ENCODE measurements at regions of chr10 and their contacts with region 1.

Region 1: GRCh38 chr10:14648005-14648765 is 126.5 kb downstream of the FAM107B start:
- DNase-seq: peak; percentile 56
- ATAC-seq: peak; percentile 79
- H3K4me3 Mint-ChIP-seq: peak overlapping the region; percentile 75
- H3K27ac Mint-ChIP-seq: peak overlapping the region; percentile 98
- H3K4me1 Mint-ChIP-seq: peaks cover 80% of the 10 kb centered on the region
- H3K27me3 Mint-ChIP-seq: no peaks in the 10 kb centered on the region
- CTCF ChIP-seq: no peak

Region 2: DNA sequence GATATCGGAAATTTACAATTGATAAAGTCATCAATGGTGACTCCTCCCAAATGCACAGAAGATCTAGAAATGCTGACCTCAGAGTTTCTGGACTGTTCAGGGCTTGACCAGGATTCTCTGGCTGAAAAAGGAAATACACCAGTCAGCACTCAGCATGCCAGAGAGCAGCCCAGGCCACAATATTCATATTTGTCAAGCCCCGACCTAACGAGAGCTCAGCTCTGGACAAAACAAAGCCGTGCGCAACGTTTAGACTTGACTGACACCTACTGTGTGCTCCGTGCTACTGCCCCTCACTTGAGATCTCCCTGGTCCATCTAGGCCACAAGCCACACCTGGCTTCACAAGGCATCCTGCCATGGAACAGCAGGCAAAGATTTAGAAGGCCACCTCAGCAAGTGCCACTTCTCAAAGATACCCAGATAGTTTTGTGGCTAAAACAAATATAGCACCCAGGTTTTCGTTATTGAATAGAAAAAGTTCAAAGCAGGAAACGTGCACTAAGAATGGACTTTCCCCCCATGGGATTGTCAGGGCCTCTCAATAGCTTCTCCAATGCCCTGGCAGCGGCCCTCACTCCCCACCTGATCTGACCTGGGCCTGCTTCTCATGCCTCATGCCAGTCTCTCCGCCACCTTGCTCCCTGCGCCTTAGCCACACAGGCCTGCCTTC is 91.8 kb before region 1 on chr10:
- CTCF ChIA-PET with region 1: interaction called, 3 read pairs
- POLR2A ChIA-PET with region 1: interaction called, 5 read pairs
- intact Hi-C with region 1: loop called (anchors 2 kb)
- DNase-seq: no peak
- ATAC-seq: peak; percentile 49
- H3K4me3 Mint-ChIP-seq: peak overlapping the region; percentile 59
- H3K27ac Mint-ChIP-seq: peak overlapping the region; percentile 91
- H3K4me1 Mint-ChIP-seq: peaks cover 96% of the 10 kb centered on the region
- H3K27me3 Mint-ChIP-seq: no peaks in the 10 kb centered on the region
- CTCF ChIP-seq: no peak

Region 3: DNA sequence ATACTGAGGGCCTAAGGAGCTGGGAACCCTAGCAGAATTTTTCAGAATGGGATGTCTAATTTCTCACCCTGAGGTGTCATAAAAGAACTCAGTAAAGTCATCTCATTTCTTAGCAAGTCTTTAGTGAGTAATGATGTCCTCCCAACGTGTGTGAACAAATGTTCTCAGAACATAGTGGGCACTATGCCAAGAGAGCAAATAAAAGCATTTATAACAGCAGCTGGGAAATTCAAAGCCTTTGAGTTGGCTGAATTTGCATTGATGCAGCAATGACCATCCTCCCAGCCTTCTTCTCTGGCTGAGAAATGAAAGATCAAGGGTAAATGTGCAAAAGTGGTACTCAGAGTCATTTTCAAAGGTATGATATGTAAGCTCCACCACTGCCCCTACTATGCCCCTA is 17.1 kb after region 1 on chr10:
- CTCF ChIA-PET with region 1: no interaction called
- POLR2A ChIA-PET with region 1: interaction called, 12 read pairs
- intact Hi-C with region 1: no loop called
- DNase-seq: no peak
- ATAC-seq: no peak
- H3K4me3 Mint-ChIP-seq: no peak overlapping the region
- H3K27ac Mint-ChIP-seq: no peak overlapping the region
- H3K4me1 Mint-ChIP-seq: peaks cover 29% of the 10 kb centered on the region
- H3K27me3 Mint-ChIP-seq: no peaks in the 10 kb centered on the region
- CTCF ChIP-seq: no peak

Region 4: GRCh38 chr10:14742815-14743214 is 94.6 kb after region 1 on chr10:
- CTCF ChIA-PET with region 1: no interaction called
- POLR2A ChIA-PET with region 1: interaction called, 11 read pairs
- intact Hi-C with region 1: no loop called
- DNase-seq: no peak
- ATAC-seq: peak; percentile 83
- H3K4me3 Mint-ChIP-seq: peak overlapping the region; percentile 64
- H3K27ac Mint-ChIP-seq: peak overlapping the region; percentile 89
- H3K4me1 Mint-ChIP-seq: peaks cover 96% of the 10 kb centered on the region
- H3K27me3 Mint-ChIP-seq: no peaks in the 10 kb centered on the region
- CTCF ChIP-seq: no peak

Region 5: DNA sequence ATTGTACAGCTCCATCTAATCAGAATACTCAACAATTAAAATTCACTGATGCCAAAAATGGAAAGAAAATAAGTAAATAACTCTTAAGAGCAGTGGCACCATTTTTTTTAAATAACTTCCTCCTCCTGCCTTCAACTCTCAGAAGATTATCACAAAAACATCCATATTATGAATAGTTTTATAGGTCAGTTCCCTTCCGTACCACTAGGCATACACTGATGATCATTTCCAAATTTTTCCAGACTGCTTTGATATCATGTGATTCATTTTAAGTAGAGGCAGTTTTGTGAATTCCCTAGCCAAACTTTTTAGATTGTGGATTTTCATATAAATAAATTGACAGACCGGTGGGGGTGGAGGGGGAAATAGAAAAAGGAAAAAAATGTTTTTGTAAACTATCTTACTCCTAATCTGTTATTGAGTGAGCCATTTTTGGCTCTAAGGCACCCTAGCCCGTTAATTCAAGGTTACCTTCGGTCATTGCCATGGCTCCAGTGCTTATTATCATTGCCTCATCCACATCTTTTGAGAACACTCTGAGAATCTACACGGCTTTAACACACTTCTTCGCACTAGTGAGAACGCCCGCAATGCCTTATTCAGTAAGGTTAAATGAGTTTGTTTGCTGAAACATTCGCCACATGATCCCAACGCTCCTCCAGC is 125.5 kb after region 1 on chr10:
- CTCF ChIA-PET with region 1: no interaction called
- POLR2A ChIA-PET with region 1: interaction called, 11 read pairs
- intact Hi-C with region 1: no loop called
- DNase-seq: no peak
- ATAC-seq: no peak
- H3K4me3 Mint-ChIP-seq: no peak overlapping the region
- H3K27ac Mint-ChIP-seq: no peak overlapping the region
- H3K4me1 Mint-ChIP-seq: no peaks in the 10 kb centered on the region
- H3K27me3 Mint-ChIP-seq: no peaks in the 10 kb centered on the region
- CTCF ChIP-seq: no peak

Region 6: GRCh38 chr10:15141136-15142054 is 493.2 kb after region 1 on chr10:
- CTCF ChIA-PET with region 1: no interaction called
- POLR2A ChIA-PET with region 1: no interaction called
- intact Hi-C with region 1: loop called (anchors 1 kb)
- DNase-seq: peak; percentile 32
- ATAC-seq: peak; percentile 94
- H3K4me3 Mint-ChIP-seq: peak overlapping the region; percentile 74
- H3K27ac Mint-ChIP-seq: peak overlapping the region; percentile 69
- H3K4me1 Mint-ChIP-seq: peaks cover 40% of the 10 kb centered on the region
- H3K27me3 Mint-ChIP-seq: no peaks in the 10 kb centered on the region
- CTCF ChIP-seq: no peak

Measured in activated B cell treated with CpG ODN at 0.5 μM for 24 hours (primary cell).